Activated CD4-positive, alpha-beta memory T cell treated with anti-CD3 and anti-CD28 coated beads, Interleukin-2, amount 10 ng/mL, durations not matched to agents 7 days and 5 days (primary cell): ENCODE measurements at regions of chr22 and their contacts with region 1.

Region 1: GRCh38 chr22:39097098-39098020 is at the start of gene APOBEC3H:
- DNase-seq: peak; percentile 64
- H3K4me3 Mint-ChIP-seq: peak within 1 kb of the TSS; percentile 94
- H3K27ac Mint-ChIP-seq: peak within 1 kb of the TSS; percentile 97
- H3K4me1 Mint-ChIP-seq: peaks cover 87% of the 10 kb centered on the region
- H3K27me3 Mint-ChIP-seq: no peaks in the 10 kb centered on the region
- total RNA-seq, gene APOBEC3H: 126 to 128 TPM

Region 2: DNA sequence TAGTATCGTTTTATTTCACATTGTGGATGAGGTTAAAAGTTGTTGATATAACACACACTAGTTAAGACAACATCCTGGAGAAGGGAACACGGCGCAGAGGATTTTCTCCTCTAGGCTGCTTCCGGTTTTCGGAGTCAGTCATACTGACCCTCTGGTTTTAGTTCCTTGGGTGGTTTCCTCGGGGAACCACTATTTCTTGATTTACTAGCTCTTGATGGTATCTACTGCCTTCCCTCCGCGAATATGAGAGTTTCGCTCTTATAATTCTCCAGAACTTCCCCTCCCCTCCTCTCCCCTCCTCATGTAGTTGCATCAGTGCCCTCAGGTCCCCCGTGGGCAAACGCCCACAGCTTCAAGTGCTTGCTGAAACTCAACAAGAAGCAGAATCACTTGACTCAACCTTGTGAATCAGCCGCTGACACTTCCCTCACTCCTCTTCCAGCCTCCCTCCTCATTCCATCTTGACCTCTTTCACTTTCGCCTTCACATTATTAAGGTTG is 155.8 kb before region 1 on chr22:
- CTCF ChIA-PET with region 1: no interaction called
- POLR2A ChIA-PET with region 1: no interaction called
- DNase-seq: peak; percentile 49
- H3K4me3 Mint-ChIP-seq: peak overlapping the region; percentile 72
- H3K27ac Mint-ChIP-seq: peak overlapping the region; percentile 71
- H3K4me1 Mint-ChIP-seq: peaks cover 27% of the 10 kb centered on the region
- H3K27me3 Mint-ChIP-seq: peaks cover 43% of the 10 kb centered on the region

Region 3: GRCh38 chr22:39117585-39118191 is 20.3 kb after region 1 on chr22:
- CTCF ChIA-PET with region 1: interaction called, 12 read pairs
- POLR2A ChIA-PET with region 1: interaction called, 7 read pairs
- DNase-seq: peak; percentile 83
- H3K4me3 Mint-ChIP-seq: peak overlapping the region; percentile 49
- H3K27ac Mint-ChIP-seq: peak overlapping the region; percentile 82
- H3K4me1 Mint-ChIP-seq: peaks cover 60% of the 10 kb centered on the region
- H3K27me3 Mint-ChIP-seq: no peaks in the 10 kb centered on the region